ENCODE measurements at regions of chr7 and their contacts with region 1.

Region 1: DNA sequence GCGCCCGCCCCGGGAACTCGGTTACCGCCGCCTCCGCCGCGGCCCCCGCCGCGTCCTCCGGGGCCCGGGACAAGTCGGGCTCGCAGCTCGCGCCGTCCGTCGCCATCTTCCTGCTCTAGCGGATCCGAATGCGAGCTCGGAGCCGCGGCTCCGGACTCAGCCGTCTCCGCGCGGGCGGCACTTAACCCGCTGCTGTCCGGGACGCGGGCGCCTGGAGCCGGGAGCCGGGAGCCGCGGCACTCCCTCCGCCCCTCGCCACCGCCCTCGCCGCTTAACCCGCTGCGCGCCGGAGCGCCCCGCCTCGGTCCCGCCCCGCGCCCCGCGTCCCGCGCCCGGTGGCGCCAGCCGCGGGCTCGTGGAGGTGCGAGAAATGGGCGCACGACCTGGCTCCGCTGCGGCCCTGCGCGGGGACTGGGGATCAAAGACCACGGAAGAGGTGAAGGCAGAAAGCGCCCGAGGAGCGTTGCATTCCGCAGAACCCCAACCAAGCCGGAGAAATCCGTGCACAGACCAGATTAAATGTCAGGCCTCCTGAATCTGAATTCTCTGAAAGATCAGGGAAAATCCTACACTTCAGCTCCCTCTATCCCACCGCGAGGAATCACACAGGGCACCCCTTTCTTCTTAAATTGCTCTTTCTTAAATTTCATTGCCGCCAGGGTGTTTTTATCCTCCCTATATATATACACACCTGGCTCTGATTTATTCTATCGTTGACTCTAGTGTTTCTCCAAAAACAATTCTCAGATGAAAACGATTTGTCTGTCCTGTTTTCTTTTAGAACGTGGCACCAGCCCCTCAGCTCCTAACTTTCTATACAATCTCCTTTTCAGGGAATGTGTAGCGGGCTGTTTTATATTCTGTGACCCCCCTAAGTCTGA is at the start of gene CTTNBP2:
- DNase-seq: peak; percentile 73
- H3K4me3 ChIP-seq: peak within 1 kb of the TSS; percentile 71 to 95 (median 83)
- H3K27ac ChIP-seq: peak within 1 kb of the TSS; percentile 68 to 87 (median 74)
- H3K4me1 ChIP-seq: peaks cover 0 to 45% (median 35%) of the 10 kb centered on the region in 4 donors
- H3K27me3 ChIP-seq: no peaks in the 10 kb centered on the region
- CTCF ChIP-seq: no peak
- EP300 ChIP-seq: no peak
- POLR2A ChIP-seq: no peak
- total RNA-seq, gene CTTNBP2: 4.9 to 11.1 (median 7.5) TPM

Region 2: DNA sequence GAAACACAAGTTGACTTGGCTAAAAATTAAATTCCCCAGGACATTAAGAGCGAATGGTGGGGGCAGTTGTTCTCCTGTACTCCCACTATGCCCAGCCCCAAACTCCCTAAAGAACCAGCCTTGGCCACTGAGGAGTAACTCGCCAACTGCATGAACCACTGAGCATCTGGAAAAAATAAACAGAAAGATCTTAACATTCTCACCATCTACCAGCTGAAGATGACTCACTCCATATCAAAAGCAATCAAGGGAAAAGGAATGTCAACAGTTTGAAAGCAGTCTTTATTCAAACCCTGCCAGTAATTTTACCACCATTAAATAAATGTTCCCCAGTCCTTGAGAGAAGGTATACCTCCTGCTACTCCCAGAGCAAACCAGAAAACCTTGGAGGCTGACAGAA is 45.7 kb before region 1 on chr7:
- intact Hi-C with region 1: loop called (anchors 10 kb)
- DNase-seq: no peak
- H3K4me3 ChIP-seq: no peak overlapping the region
- H3K27ac ChIP-seq: peak overlapping the region in 1 of 4 donors; percentile 2
- H3K4me1 ChIP-seq: peaks cover 0 to 43% (median 32%) of the 10 kb centered on the region in 4 donors
- H3K27me3 ChIP-seq: no peaks in the 10 kb centered on the region
- CTCF ChIP-seq: no peak
- EP300 ChIP-seq: no peak
- POLR2A ChIP-seq: no peak

Region 3: GRCh38 chr7:118183786-118184564 is 310.4 kb after region 1 on chr7 and contains the start of gene LSM8:
- intact Hi-C with region 1: loop called (anchors 10 kb)
- DNase-seq: peak; percentile 98
- H3K4me3 ChIP-seq: peak within 1 kb of the TSS; percentile 77 to 91 (median 83)
- H3K27ac ChIP-seq: peak within 1 kb of the TSS; percentile 93 to 94 (median 94)
- H3K4me1 ChIP-seq: peaks cover 0 to 37% (median 21%) of the 10 kb centered on the region in 4 donors
- H3K27me3 ChIP-seq: no peaks in the 10 kb centered on the region
- CTCF ChIP-seq: no peak
- EP300 ChIP-seq: peak in 1 of 4 donors; percentile 21
- POLR2A ChIP-seq: peak; percentile 76
- total RNA-seq, gene LSM8: 26.8 to 42.7 (median 36.6) TPM

Measured in sigmoid colon (tissue), 7 donors.